A673 (cell line): ENCODE measurements at regions of chr12 and their contacts with region 1.

Region 1: DNA sequence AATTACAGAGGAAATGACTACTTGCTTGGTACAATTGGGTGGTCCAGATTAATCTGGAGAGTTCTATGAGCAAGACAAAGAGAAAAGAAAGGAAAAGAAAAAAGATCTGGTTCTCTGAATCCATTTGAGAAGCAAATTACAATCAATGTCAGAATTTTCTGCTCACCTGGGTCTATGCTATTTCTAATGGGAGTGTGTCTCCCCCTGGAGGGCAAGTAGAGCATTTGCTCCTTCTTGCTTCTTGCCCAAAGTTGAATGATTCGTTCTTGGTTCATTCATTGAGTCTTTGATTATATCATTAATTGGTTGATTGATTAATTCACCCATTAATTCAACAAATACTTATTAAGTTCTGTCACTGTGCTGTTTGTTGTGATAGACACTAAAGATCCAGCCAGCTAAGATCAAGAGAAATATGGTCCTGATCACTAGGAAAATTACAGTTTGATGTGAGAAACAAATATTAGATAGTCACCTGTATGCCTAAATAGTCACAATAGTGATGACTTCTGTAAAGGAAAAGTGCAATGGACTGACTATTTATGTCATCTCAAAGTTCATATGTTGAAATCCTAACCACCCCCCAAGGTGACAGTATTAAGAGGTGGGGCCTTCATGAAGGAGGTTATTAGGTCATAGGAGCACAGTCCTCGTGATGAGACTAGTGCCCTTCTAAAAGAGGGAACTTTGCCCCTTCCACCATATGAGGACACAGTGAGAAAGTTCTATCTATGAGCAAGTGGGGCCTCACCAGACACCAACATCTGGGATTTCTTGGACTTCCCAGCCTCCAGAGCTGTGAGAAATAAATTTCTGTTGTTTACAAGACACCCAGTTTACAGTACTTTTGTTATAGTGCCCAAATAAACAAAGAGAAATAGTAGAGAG is 8.0 kb upstream of the ASB8 start:
- DNase-seq: peak; percentile 68
- H3K4me3 ChIP-seq: no peak overlapping the region
- H3K27ac ChIP-seq: no peak overlapping the region
- H3K4me1 ChIP-seq: no peaks in the 10 kb centered on the region
- H3K27me3 ChIP-seq: no peaks in the 10 kb centered on the region
- CTCF ChIP-seq: peak; percentile 90

Region 2: GRCh38 chr12:47715393-47715876 is 449.9 kb before region 1 on chr12:
- CTCF ChIA-PET with region 1: no interaction called
- POLR2A ChIA-PET with region 1: no interaction called
- intact Hi-C with region 1: loop called (anchors 10 kb)
- DNase-seq: peak; percentile 89
- H3K4me3 ChIP-seq: no peak overlapping the region
- H3K27ac ChIP-seq: no peak overlapping the region
- H3K4me1 ChIP-seq: peaks cover 11% of the 10 kb centered on the region
- H3K27me3 ChIP-seq: no peaks in the 10 kb centered on the region
- CTCF ChIP-seq: peak; percentile 81

Region 3: DNA sequence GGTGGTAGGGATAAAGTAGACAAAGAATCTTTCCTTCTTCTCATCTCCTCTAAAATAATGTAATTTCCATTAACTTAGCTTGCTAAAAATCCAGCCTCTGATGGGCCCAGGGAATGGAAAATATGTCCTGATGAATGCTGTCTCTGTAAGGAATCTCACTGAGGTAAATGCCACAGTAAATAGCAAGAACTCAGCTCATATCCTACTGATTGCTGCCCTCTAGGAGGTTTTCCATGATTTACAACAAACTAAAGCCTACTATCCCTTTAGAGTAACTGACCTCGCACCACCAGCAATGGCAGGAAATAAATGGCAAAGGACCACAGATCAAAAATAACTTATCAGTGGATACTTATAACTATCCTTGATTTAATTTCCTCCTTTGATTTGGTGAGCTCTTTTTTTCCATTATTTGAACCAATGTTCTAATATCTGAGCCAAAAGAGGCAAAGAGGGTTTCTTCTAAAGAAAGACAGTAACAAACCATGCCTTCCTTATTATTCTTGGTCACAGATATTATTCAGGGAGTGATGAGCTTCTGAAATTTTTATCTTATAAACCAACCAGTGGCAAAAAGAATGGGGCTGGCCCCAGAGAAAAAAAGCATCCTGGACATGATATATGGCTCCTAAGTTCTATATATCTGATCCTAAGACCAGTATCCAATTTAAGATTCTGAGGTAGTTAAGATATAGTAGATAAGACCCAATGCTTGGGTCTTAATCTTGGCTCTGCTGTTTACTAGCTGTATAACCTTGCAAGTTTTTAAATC is 103.2 kb before region 1 on chr12:
- CTCF ChIA-PET with region 1: no interaction called
- POLR2A ChIA-PET with region 1: no interaction called
- intact Hi-C with region 1: no loop called
- DNase-seq: no peak
- H3K4me3 ChIP-seq: no peak overlapping the region
- H3K27ac ChIP-seq: no peak overlapping the region
- H3K4me1 ChIP-seq: no peaks in the 10 kb centered on the region
- H3K27me3 ChIP-seq: no peaks in the 10 kb centered on the region
- CTCF ChIP-seq: no peak

Region 4: DNA sequence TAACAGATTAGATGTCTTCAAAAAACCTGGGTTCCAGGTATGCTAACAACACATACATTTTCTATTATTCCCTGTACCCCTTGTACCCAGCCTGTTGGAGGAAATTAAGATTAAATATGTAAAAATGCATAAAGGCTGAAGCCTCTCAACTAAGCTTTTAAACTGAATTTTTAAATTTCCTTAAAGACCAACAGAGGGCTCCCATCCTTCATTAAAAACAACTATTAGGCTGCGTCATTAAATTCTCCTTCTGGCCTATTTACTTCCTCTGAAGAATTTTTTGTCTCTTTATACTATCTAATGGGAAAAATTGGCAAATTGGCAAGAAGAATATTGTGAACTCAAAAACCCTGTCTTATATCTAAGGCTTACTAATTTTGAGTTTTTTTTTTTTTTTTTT is 81.3 kb before region 1 on chr12:
- CTCF ChIA-PET with region 1: no interaction called
- POLR2A ChIA-PET with region 1: interaction called, 22 read pairs
- intact Hi-C with region 1: no loop called
- DNase-seq: peak; percentile 24
- H3K4me3 ChIP-seq: no peak overlapping the region
- H3K27ac ChIP-seq: no peak overlapping the region
- H3K4me1 ChIP-seq: no peaks in the 10 kb centered on the region
- H3K27me3 ChIP-seq: no peaks in the 10 kb centered on the region
- CTCF ChIP-seq: peak; percentile 36; the same call in 1 of the 2 replicates